Mammary epithelial cell (primary cell): ENCODE measurements at regions of chr11 and their contacts with region 1.

Region 1: GRCh38 chr11:124644426-124645280 is 22.0 kb downstream of the TBRG1 start:
- DNase-seq: peak; percentile 50
- H3K4me3 ChIP-seq: peak overlapping the region in 1 of 3 experiments; percentile 13
- H3K27ac ChIP-seq: no peak overlapping the region
- H3K4me1 ChIP-seq: peaks cover 16% of the 10 kb centered on the region
- H3K27me3 ChIP-seq: no peaks in the 10 kb centered on the region
- CTCF ChIP-seq: peak; percentile 80 to 86

Region 2: DNA sequence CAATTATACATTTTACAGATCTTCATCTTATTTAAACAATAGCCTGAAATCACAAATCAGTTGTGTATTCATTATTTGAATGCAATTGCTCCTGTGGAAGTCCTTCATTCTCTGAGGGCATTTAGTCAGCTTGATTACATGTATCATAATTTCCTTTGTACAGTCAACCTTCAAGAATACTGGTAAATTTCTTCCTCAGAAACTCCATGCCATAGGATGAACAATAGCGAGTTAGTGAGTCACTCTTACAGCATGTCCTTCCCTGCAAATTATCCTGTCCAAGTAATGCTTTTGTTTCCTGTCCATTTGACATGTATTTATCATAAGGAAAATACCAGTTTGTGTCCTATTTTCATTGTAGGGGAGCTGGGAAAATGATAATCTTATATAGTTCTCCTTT is 670.8 kb before region 1 on chr11:
- CTCF ChIA-PET with region 1: no interaction called
- dilution Hi-C with region 1: no loop called
- in situ Hi-C with region 1: no loop called
- intact Hi-C with region 1: no loop called
- DNase-seq: peak; percentile 93
- H3K4me3 ChIP-seq: no peak overlapping the region
- H3K27ac ChIP-seq: peak overlapping the region; percentile 98
- H3K4me1 ChIP-seq: peaks cover 42% of the 10 kb centered on the region
- H3K27me3 ChIP-seq: no peaks in the 10 kb centered on the region
- CTCF ChIP-seq: no peak

Region 3: GRCh38 chr11:124415356-124415923 is 229.2 kb before region 1 on chr11:
- CTCF ChIA-PET with region 1: no interaction called
- dilution Hi-C with region 1: no loop called
- in situ Hi-C with region 1: no loop called
- intact Hi-C with region 1: loop called (anchors 1 kb)
- DNase-seq: no peak
- H3K4me3 ChIP-seq: no peak overlapping the region
- H3K27ac ChIP-seq: no peak overlapping the region
- H3K4me1 ChIP-seq: no peaks in the 10 kb centered on the region
- H3K27me3 ChIP-seq: peaks cover 4% of the 10 kb centered on the region
- CTCF ChIP-seq: peak; percentile 47 to 70

Region 4: GRCh38 chr11:124556828-124557227 is 87.8 kb before region 1 on chr11:
- CTCF ChIA-PET with region 1: no interaction called
- dilution Hi-C with region 1: no loop called
- in situ Hi-C with region 1: no loop called
- intact Hi-C with region 1: no loop called
- DNase-seq: no peak
- H3K4me3 ChIP-seq: no peak overlapping the region
- H3K27ac ChIP-seq: no peak overlapping the region
- H3K4me1 ChIP-seq: no peaks in the 10 kb centered on the region
- H3K27me3 ChIP-seq: no peaks in the 10 kb centered on the region
- CTCF ChIP-seq: no peak

Region 5: GRCh38 chr11:124612045-124612444 is 32.6 kb before region 1 on chr11:
- CTCF ChIA-PET with region 1: no interaction called
- dilution Hi-C with region 1: no loop called
- in situ Hi-C with region 1: no loop called
- intact Hi-C with region 1: no loop called
- DNase-seq: no peak
- H3K4me3 ChIP-seq: no peak overlapping the region
- H3K27ac ChIP-seq: no peak overlapping the region
- H3K4me1 ChIP-seq: no peaks in the 10 kb centered on the region
- H3K27me3 ChIP-seq: no peaks in the 10 kb centered on the region
- CTCF ChIP-seq: no peak

Region 6: DNA sequence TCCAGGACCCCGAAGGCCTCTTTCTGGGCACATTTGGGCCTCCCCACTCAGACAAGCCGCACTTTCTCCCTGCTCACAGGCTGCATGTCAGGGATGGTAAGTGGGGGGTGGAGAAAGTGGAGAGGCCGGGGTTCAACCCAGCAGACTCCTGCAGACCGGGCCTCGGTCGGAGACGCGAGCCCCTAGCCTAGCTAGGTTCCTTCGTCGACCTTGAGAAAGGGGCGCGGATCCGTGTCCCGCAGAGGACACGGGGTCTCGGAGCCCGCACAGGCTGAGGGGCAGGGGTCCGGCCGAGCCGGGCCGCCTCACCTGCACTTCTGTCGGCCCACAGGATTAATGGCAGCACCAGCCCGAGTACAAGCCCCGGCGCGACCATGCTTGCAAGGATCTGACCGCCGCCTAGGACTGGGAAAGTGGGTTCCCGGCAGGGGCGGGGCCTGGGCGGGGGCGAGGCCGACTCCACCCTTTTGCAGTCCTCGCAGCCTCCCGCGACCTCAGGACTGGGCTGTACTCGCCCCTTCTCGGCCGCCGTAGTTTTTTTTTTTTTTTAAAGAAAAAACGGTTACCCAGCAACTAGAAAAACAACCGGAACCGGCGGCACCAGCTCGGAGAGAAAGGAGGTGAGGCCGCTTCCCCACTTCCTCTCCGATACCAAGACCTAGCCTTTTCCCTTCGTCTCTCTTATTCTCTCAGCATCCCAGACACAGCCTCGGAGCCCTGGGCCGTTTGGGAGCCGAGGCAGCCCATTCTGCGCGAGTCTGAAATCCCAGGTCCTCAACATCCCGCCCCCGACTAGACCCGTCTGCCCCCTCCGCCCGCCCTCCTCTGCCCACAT is 28.9 kb after region 1 on chr11 and contains the starts of genes SIAE and SPA17:
- CTCF ChIA-PET with region 1: no interaction called
- dilution Hi-C with region 1: no loop called
- in situ Hi-C with region 1: no loop called
- intact Hi-C with region 1: loop called (anchors 1 kb)
- DNase-seq: peak; percentile 95
- H3K4me3 ChIP-seq: peak within 1 kb of the TSS; percentile 67 to 71 (median 70)
- H3K27ac ChIP-seq: peak within 1 kb of the TSS; percentile 78
- H3K4me1 ChIP-seq: peaks cover 14% of the 10 kb centered on the region
- H3K27me3 ChIP-seq: no peaks in the 10 kb centered on the region
- CTCF ChIP-seq: no peak
- total RNA-seq, gene SIAE: 13.7 to 13.8 TPM
- total RNA-seq, gene SPA17: 6.2 to 8.9 TPM

Region 7: DNA sequence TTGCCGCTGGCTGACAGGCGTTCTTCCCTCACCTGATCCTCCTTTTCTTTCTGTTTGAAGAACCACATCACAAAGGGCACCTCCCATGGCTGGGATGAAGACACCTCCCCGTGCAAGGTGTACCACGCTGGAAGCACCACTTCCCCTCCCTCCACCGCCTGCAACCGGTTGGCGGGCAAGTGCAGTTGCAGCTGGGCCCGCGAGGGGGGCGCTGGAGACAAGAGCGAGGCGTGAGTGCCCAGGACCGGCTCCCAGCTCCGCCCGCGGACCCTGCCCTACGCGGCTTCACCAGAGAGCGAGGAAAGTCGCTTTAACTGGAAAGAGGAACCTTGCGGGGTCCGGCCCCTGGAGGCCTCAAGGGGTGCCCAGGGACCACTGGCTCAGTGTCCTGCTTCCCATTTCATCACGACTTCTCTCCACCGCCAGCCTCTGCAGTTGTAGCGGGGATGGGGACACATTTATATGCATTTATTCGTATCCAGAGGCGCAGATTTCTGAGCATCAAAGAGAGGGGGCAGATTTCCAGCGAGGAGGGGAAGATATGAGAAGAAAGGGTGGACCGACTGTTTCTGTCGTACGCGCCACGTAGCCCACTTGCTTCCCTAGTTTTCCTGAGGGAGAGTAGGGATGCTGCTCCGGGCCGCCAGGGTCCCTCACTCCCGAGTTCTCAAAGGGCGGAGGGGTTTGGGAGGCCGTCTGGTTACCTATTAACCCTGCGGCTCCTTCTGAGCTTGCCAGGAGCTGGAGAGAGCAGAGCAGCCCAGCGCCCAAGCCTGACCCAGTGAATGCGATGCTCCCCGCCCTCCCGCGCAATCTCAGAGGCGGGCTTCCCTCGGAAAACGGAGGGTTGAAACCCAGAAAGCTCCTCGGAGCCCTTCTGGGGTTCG is 113.9 kb after region 1 on chr11:
- CTCF ChIA-PET with region 1: no interaction called
- dilution Hi-C with region 1: no loop called
- in situ Hi-C with region 1: no loop called
- intact Hi-C with region 1: loop called (anchors 1 kb)
- DNase-seq: peak; percentile 45
- H3K4me3 ChIP-seq: peak overlapping the region in 2 of 3 experiments; percentile 10 to 22
- H3K27ac ChIP-seq: no peak overlapping the region
- H3K4me1 ChIP-seq: peaks cover 20% of the 10 kb centered on the region
- H3K27me3 ChIP-seq: peaks cover 25% of the 10 kb centered on the region
- CTCF ChIP-seq: peak; percentile 49 to 73

Region 8: GRCh38 chr11:124875943-124876817 is 231.5 kb after region 1 on chr11:
- CTCF ChIA-PET with region 1: interaction called, 10 read pairs
- dilution Hi-C with region 1: no loop called
- in situ Hi-C with region 1: no loop called
- intact Hi-C with region 1: no loop called
- DNase-seq: peak; percentile 86
- H3K4me3 ChIP-seq: peak overlapping the region; percentile 65 to 80 (median 70)
- H3K27ac ChIP-seq: peak overlapping the region; percentile 88
- H3K4me1 ChIP-seq: peaks cover 16% of the 10 kb centered on the region
- H3K27me3 ChIP-seq: no peaks in the 10 kb centered on the region
- CTCF ChIP-seq: peak; percentile 46 to 79